ENCODE measurements at regions of chr9 and their contacts with region 1.

Region 1: GRCh38 chr9:81558091-81558830 is 131.1 kb downstream of the TLE1 start:
- DNase-seq: peak; percentile 88
- ATAC-seq: peak; percentile 64
- H3K4me3 ChIP-seq: no peak overlapping the region
- H3K27ac ChIP-seq: peak overlapping the region; percentile 69
- H3K4me1 ChIP-seq: peaks cover 25% of the 10 kb centered on the region
- H3K27me3 ChIP-seq: no peaks in the 10 kb centered on the region
- CTCF ChIP-seq: no peak
- POLR2A ChIP-seq: no peak
- RAD21 ChIP-seq: no peak; the same call in 1 of the 2 replicates

Region 2: DNA sequence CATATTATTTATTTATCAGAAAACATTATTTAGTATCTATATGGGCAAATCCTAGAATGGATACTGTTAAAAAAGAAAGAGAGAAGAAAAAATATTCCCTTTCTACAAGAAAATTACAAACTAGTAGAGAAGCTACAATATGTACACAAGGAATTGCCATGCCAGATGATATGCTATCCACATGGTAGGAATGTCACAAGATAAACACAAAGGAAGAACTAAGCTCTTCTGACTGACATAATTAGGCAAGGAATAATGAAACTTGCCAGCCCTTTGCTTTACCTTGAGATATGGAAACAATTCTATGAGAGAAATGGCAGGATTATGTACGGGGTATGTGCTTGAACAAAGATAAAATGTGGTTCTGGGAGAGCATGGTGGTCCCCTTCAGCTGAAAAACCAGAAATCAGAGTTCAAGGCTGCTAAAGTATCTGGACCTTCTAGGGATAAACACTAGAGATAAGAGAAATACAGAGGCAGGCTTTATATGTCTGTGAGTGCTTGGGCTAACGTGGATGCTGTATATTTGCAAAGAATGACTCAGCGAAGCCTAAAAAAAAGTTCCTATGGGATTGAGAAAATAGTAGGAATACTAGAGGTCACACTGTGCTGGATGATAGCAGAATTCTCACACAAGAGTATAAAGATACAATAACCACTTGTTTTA is 320.6 kb before region 1 on chr9:
- CTCF ChIA-PET with region 1: no interaction called
- POLR2A ChIA-PET with region 1: no interaction called
- dilution Hi-C with region 1: no loop called
- in situ Hi-C with region 1: no loop called
- intact Hi-C with region 1: no loop called
- DNase-seq: peak; percentile 77
- ATAC-seq: peak; percentile 98
- H3K4me3 ChIP-seq: no peak overlapping the region
- H3K27ac ChIP-seq: peak overlapping the region; percentile 31; the same call in 1 of the 2 replicates
- H3K4me1 ChIP-seq: no peaks in the 10 kb centered on the region
- H3K27me3 ChIP-seq: no peaks in the 10 kb centered on the region
- CTCF ChIP-seq: no peak
- POLR2A ChIP-seq: no peak
- RAD21 ChIP-seq: peak; percentile 1; the same call in 1 of the 2 replicates

Region 3: DNA sequence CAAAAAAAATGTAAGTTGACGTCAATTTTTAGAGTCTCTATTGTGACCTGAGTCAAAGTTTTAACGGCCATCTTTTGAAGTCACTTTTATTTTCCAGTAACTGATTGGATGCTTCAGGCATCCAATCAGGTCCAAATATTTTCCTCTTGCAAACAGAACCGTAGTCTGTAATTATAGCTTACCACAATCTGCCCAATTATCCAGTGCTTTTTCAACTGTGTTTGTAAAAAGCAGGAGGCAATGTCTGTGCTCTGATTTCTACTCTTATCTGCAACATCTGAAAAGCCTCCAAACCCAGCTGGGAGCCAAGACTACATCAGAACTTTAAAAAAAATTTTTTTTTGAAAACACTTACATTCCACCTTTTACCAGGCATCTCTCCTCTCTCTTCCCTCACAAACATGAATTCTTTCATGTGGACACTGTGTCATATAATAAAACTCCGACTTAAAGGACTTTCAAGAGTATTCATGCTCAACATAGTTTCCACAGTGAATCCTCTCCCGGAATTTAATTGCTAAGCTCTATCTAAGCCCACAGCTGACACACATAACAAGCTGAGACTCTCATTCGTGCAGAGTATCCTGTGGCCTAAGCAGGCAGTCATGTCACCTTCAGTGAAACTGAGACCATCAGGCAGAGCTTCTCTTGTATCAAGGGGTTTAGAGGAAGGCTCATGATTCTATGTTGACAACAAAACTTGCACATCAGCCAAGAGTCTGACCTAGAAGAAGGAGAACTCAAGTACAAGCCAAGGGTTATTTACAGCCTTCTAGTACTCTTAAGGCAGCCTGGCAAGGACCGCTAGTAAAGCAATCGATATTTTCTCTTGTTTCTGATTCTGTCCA is 141.6 kb before region 1 on chr9:
- CTCF ChIA-PET with region 1: no interaction called
- POLR2A ChIA-PET with region 1: no interaction called
- dilution Hi-C with region 1: no loop called
- in situ Hi-C with region 1: no loop called
- intact Hi-C with region 1: no loop called
- DNase-seq: peak; percentile 41
- ATAC-seq: peak; percentile 71
- H3K4me3 ChIP-seq: no peak overlapping the region
- H3K27ac ChIP-seq: no peak overlapping the region
- H3K4me1 ChIP-seq: peaks cover 5% of the 10 kb centered on the region
- H3K27me3 ChIP-seq: no peaks in the 10 kb centered on the region
- CTCF ChIP-seq: no peak
- POLR2A ChIP-seq: no peak
- RAD21 ChIP-seq: no peak

Region 4: DNA sequence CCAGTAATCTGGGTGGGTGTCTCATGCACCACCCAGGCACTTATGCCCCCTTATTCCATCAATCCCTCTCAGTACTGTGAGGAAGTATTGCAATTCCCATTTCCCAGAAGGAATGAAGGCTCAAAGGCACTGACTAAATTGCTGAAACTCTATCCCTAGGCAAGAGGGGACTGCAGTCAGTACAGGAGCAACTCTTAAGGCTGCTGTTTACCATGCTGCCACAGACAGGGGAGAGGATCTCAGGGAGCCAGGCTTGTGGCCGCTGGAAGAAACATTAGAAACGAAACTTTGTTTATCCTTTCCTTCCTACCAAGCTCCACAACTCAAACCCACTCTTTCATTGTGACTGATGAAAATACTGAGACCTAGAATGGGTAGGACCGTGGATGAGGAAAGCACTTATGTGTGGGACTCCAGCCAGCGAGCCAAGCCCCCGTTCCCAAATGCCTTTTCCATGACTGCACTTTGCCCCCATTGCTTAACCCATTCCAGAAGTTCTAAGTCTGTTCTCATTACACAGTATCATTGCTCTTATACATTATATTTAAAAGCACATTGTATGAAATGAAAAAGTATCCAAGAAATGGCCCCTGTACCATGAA is 76.8 kb after region 1 on chr9:
- CTCF ChIA-PET with region 1: no interaction called
- POLR2A ChIA-PET with region 1: interaction called, 3 read pairs
- dilution Hi-C with region 1: no loop called
- in situ Hi-C with region 1: no loop called
- intact Hi-C with region 1: loop called (anchors 2 kb)
- DNase-seq: peak; percentile 79
- ATAC-seq: peak; percentile 56
- H3K4me3 ChIP-seq: peak overlapping the region; percentile 9; the same call in 1 of the 2 replicates
- H3K27ac ChIP-seq: peak overlapping the region; percentile 46; the same call in 1 of the 2 replicates
- H3K4me1 ChIP-seq: peaks cover 27% of the 10 kb centered on the region
- H3K27me3 ChIP-seq: no peaks in the 10 kb centered on the region
- CTCF ChIP-seq: no peak
- POLR2A ChIP-seq: no peak
- RAD21 ChIP-seq: no peak